Right ventricle myocardium superior (tissue), 1 donor: ENCODE measurements at regions of chr3 and their contacts with region 1.

Region 1: GRCh38 chr3:141191097-141191749 is 40.4 kb upstream of the PXYLP1 start:
- DNase-seq: no peak
- ATAC-seq: no peak

Region 2: GRCh38 chr3:140870370-140870769 is 320.9 kb before region 1 on chr3:
- intact Hi-C with region 1: no loop called
- DNase-seq: no peak
- ATAC-seq: no peak

Region 3: GRCh38 chr3:141000027-141000663 is 191.1 kb before region 1 on chr3:
- intact Hi-C with region 1: loop called (anchors 2 kb)
- DNase-seq: peak; percentile 78
- ATAC-seq: peak; percentile 99